ENCODE measurements at regions of chrX and their contacts with region 1.

Region 1: GRCh38 chrX:46803140-46803539 is 33.7 kb upstream of the RP2 start:
- DNase-seq: no peak
- H3K4me3 ChIP-seq: no peak overlapping the region
- H3K27ac ChIP-seq: no peak overlapping the region
- H3K4me1 ChIP-seq: no peaks in the 10 kb centered on the region
- H3K27me3 ChIP-seq: no peaks in the 10 kb centered on the region
- CTCF ChIP-seq: peak; percentile 13 to 44

Region 2: DNA sequence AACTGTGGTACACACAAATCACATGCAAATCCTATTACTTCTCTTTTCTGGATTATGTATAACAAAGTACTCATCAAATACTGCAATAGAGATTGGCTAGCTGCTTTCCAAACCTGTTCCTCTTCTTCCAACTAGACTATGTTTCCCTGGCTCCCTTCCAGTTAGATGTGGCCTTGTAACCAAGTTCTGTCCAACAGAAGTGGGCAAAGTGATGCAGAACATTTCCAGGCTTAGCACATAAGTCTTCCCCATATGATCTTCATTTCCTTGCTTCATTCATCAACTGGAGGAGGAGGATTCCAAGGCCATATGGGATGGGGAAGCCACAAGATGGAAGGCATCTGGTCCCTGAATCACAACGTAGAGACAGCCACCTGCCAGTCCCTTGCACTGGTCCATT is 52.3 kb before region 1 on chrX:
- CTCF ChIA-PET with region 1: no interaction called
- dilution Hi-C with region 1: no loop called
- in situ Hi-C with region 1: no loop called
- intact Hi-C with region 1: no loop called
- DNase-seq: no peak
- H3K4me3 ChIP-seq: no peak overlapping the region
- H3K27ac ChIP-seq: no peak overlapping the region
- H3K4me1 ChIP-seq: no peaks in the 10 kb centered on the region
- H3K27me3 ChIP-seq: no peaks in the 10 kb centered on the region
- CTCF ChIP-seq: no peak

Region 3: GRCh38 chrX:46819136-46819535 is 16.0 kb after region 1 on chrX:
- CTCF ChIA-PET with region 1: no interaction called
- dilution Hi-C with region 1: no loop called
- in situ Hi-C with region 1: no loop called
- intact Hi-C with region 1: no loop called
- DNase-seq: peak; percentile 45
- H3K4me3 ChIP-seq: no peak overlapping the region
- H3K27ac ChIP-seq: no peak overlapping the region
- H3K4me1 ChIP-seq: peaks cover 19% of the 10 kb centered on the region
- H3K27me3 ChIP-seq: no peaks in the 10 kb centered on the region
- CTCF ChIP-seq: no peak

Region 4: DNA sequence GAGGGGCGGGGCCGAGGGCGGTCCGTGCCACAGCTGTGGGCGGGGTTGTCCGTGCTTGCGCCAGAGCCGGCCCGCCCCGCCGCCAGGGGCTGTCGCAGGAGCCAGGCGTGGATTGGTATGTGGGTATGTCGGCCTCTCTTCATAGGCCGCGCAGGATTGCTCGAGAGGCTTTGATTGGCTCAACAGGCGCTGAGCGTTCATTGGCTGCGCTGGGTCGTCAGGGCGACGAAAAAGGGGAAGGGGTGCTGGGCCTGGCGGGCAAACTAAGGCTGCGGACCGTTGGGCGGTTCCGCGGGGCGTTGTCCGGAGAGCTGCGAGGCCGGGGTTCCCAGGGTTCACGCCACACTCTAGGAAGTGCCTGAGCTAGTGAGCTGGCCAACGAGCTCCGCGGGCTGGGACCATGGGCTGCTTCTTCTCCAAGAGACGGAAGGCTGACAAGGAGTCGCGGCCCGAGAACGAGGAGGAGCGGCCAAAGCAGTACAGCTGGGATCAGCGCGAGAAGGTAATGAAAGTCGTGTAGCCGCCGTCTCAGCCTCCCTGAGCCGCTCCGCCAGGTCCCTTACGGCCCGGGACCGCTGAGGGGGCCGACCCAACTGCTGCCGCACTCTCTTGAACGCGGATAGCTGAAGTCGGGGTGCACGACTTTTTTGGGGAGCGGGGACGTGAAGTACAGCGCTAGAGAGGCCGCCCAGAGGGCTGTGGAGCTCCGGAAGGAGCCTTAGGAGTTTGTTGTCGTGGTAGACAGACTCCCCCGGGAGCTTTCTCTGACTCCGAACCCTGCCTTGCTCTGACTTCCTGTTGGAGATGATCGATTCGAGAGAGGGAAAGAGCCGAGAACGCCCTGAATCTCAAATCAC is 33.8 kb after region 1 on chrX and contains the start of gene RP2:
- CTCF ChIA-PET with region 1: no interaction called
- dilution Hi-C with region 1: no loop called
- in situ Hi-C with region 1: no loop called
- intact Hi-C with region 1: loop called (anchors 5 kb)
- DNase-seq: peak; percentile 91
- H3K4me3 ChIP-seq: peak within 1 kb of the TSS; percentile 67 to 81 (median 70)
- H3K27ac ChIP-seq: peak within 1 kb of the TSS; percentile 80
- H3K4me1 ChIP-seq: peaks cover 3% of the 10 kb centered on the region
- H3K27me3 ChIP-seq: no peaks in the 10 kb centered on the region
- CTCF ChIP-seq: no peak
- total RNA-seq, gene RP2: 12.8 to 27.2 TPM

Measured in mammary epithelial cell (primary cell).